GM12878 (cell line): ENCODE measurements at regions of chr14 and their contacts with region 1.

Region 1: GRCh38 chr14:76962303-76962660 is 66.2 kb downstream of the IRF2BPL start:
- DNase-seq: no peak
- ATAC-seq: no peak
- H3K4me3 ChIP-seq: peak overlapping the region; percentile 50; the same call in 1 of the 2 replicates
- H3K27ac ChIP-seq: peak overlapping the region; percentile 90
- H3K4me1 ChIP-seq: peaks cover 77% of the 10 kb centered on the region
- H3K27me3 ChIP-seq: no peaks in the 10 kb centered on the region
- CTCF ChIP-seq: no peak
- EP300 ChIP-seq: no peak
- POLR2A ChIP-seq: no peak
- RAD21 ChIP-seq: no peak

Region 2: GRCh38 chr14:76910371-76910890 is 51.9 kb before region 1 on chr14:
- CTCF ChIA-PET with region 1: interaction called, 50 read pairs
- POLR2A ChIA-PET with region 1: interaction called, 9 read pairs
- RAD21 ChIA-PET with region 1: interaction called, 51 read pairs
- SMC1A ChIA-PET with region 1: interaction called, 27 read pairs
- in situ Hi-C with region 1: no loop called
- intact Hi-C with region 1: loop called (anchors 1 kb)
- DNase-seq: no peak
- ATAC-seq: no peak
- H3K4me3 ChIP-seq: no peak overlapping the region
- H3K27ac ChIP-seq: no peak overlapping the region
- H3K4me1 ChIP-seq: peaks cover 9% of the 10 kb centered on the region
- H3K27me3 ChIP-seq: no peaks in the 10 kb centered on the region
- CTCF ChIP-seq: no peak
- EP300 ChIP-seq: no peak
- POLR2A ChIP-seq: no peak
- RAD21 ChIP-seq: no peak

Region 3: DNA sequence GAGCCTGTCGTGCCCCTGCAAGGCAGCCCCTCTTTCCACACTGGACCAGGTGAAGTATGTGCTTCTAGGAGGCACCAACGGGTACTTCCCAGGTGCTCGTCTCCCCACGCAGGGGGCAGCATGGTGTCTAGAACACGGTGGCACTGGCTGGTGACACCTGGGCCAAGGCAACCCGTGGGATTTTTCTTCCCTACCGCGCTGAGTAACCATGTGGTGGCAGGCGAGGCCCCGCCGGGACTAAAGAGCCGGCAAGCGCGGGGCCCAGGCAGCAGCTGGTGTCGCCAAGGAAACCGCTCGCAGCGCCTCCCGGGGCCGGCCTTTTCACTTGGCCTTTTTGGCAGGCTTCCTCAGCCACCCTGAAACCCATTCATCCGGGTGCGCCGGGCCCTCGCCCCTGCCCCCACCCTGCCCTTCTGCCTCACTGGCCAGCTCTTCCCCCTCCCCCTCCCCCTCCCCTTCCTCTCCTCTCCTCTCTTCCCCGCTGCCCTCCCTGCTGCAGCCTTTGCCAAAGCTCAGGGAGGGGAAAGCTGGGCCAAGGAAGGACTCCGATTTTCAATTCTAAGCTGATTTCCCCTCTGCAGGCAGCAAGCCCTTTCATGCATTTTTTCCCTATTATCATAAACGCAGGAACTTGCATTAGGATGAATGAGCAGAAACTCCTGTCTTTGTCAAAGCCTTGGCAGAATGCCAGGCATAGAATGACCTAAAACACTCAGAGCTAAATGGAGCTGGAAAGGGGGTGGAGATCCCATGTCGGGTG is 15.0 kb before region 1 on chr14:
- CTCF ChIA-PET with region 1: interaction called, 21 read pairs
- POLR2A ChIA-PET with region 1: interaction called, 95 read pairs
- RAD21 ChIA-PET with region 1: interaction called, 285 read pairs
- SMC1A ChIA-PET with region 1: interaction called, 179 read pairs
- in situ Hi-C with region 1: no loop called
- intact Hi-C with region 1: loop called (anchors 2 kb)
- DNase-seq: peak; percentile 67
- ATAC-seq: peak; percentile 87
- H3K4me3 ChIP-seq: no peak overlapping the region
- H3K27ac ChIP-seq: peak overlapping the region; percentile 64
- H3K4me1 ChIP-seq: peaks cover 29% of the 10 kb centered on the region
- H3K27me3 ChIP-seq: no peaks in the 10 kb centered on the region
- CTCF ChIP-seq: peak; percentile 45 to 72 (median 58)
- EP300 ChIP-seq: peak in 1 of 2 experiments; percentile 65; a peak in 2 of 4 replicates
- POLR2A ChIP-seq: no peak
- RAD21 ChIP-seq: peak; percentile 72

Region 4: GRCh38 chr14:76985540-76986230 is 23.4 kb after region 1 on chr14:
- CTCF ChIA-PET with region 1: interaction called, 3 read pairs
- POLR2A ChIA-PET with region 1: interaction called, 3 read pairs
- RAD21 ChIA-PET with region 1: interaction called, 19 read pairs
- SMC1A ChIA-PET with region 1: interaction called, 6 read pairs
- in situ Hi-C with region 1: no loop called
- intact Hi-C with region 1: no loop called
- DNase-seq: no peak
- ATAC-seq: peak; percentile 46
- H3K4me3 ChIP-seq: no peak overlapping the region
- H3K27ac ChIP-seq: no peak overlapping the region
- H3K4me1 ChIP-seq: peaks cover 4% of the 10 kb centered on the region
- H3K27me3 ChIP-seq: no peaks in the 10 kb centered on the region
- CTCF ChIP-seq: no peak
- EP300 ChIP-seq: no peak
- POLR2A ChIP-seq: no peak
- RAD21 ChIP-seq: no peak

Region 5: GRCh38 chr14:77023001-77023996 is 61.0 kb after region 1 on chr14:
- CTCF ChIA-PET with region 1: interaction called, 22 read pairs
- POLR2A ChIA-PET with region 1: interaction called, 48 read pairs
- RAD21 ChIA-PET with region 1: interaction called, 101 read pairs
- SMC1A ChIA-PET with region 1: interaction called, 133 read pairs
- in situ Hi-C with region 1: no loop called
- intact Hi-C with region 1: loop called (anchors 1 kb)
- DNase-seq: no peak
- ATAC-seq: peak; percentile 7
- H3K4me3 ChIP-seq: no peak overlapping the region
- H3K27ac ChIP-seq: peak overlapping the region; percentile 56
- H3K4me1 ChIP-seq: peaks cover 51% of the 10 kb centered on the region
- H3K27me3 ChIP-seq: no peaks in the 10 kb centered on the region
- CTCF ChIP-seq: 0 out of 6 replicates have a peak, but pooled peaks of 2 of the 3 experiments have one; percentile 2 to 14
- EP300 ChIP-seq: no peak
- POLR2A ChIP-seq: no peak
- RAD21 ChIP-seq: no peak

Region 6: GRCh38 chr14:77033622-77034521 is 71.6 kb after region 1 on chr14:
- CTCF ChIA-PET with region 1: interaction called, 15 read pairs
- POLR2A ChIA-PET with region 1: interaction called, 48 read pairs
- RAD21 ChIA-PET with region 1: interaction called, 101 read pairs
- SMC1A ChIA-PET with region 1: interaction called, 172 read pairs
- in situ Hi-C with region 1: no loop called
- intact Hi-C with region 1: no loop called
- DNase-seq: peak; percentile 72
- ATAC-seq: peak; percentile 86
- H3K4me3 ChIP-seq: peak overlapping the region; percentile 78
- H3K27ac ChIP-seq: peak overlapping the region; percentile 99
- H3K4me1 ChIP-seq: peaks cover 61% of the 10 kb centered on the region
- H3K27me3 ChIP-seq: no peaks in the 10 kb centered on the region
- CTCF ChIP-seq: no peak
- EP300 ChIP-seq: peak in 1 of 2 experiments; percentile 47; a peak in 3 of 4 replicates
- POLR2A ChIP-seq: peak; percentile 85
- RAD21 ChIP-seq: no peak

Region 7: GRCh38 chr14:77053046-77053841 is 91.0 kb after region 1 on chr14:
- CTCF ChIA-PET with region 1: interaction called, 18 read pairs
- POLR2A ChIA-PET with region 1: interaction called, 6 read pairs
- RAD21 ChIA-PET with region 1: interaction called, 48 read pairs
- SMC1A ChIA-PET with region 1: interaction called, 24 read pairs
- in situ Hi-C with region 1: no loop called
- intact Hi-C with region 1: loop called (anchors 1 kb)
- DNase-seq: no peak
- ATAC-seq: peak; percentile 98
- H3K4me3 ChIP-seq: no peak overlapping the region
- H3K27ac ChIP-seq: no peak overlapping the region
- H3K4me1 ChIP-seq: peaks cover 12% of the 10 kb centered on the region
- H3K27me3 ChIP-seq: no peaks in the 10 kb centered on the region
- CTCF ChIP-seq: peak; percentile 77 to 90 (median 85)
- EP300 ChIP-seq: no peak
- POLR2A ChIP-seq: no peak
- RAD21 ChIP-seq: peak; percentile 91

Region 8: GRCh38 chr14:77400219-77400618 is 437.9 kb after region 1 on chr14:
- CTCF ChIA-PET with region 1: no interaction called
- POLR2A ChIA-PET with region 1: no interaction called
- RAD21 ChIA-PET with region 1: no interaction called
- SMC1A ChIA-PET with region 1: no interaction called
- in situ Hi-C with region 1: no loop called
- intact Hi-C with region 1: no loop called
- DNase-seq: no peak
- ATAC-seq: no peak
- H3K4me3 ChIP-seq: no peak overlapping the region
- H3K27ac ChIP-seq: no peak overlapping the region
- H3K4me1 ChIP-seq: no peaks in the 10 kb centered on the region
- H3K27me3 ChIP-seq: no peaks in the 10 kb centered on the region
- CTCF ChIP-seq: no peak
- EP300 ChIP-seq: no peak
- POLR2A ChIP-seq: no peak
- RAD21 ChIP-seq: no peak

Region 9: GRCh38 chr14:78327426-78328221 is 1365.3 kb after region 1 on chr14:
- CTCF ChIA-PET with region 1: no interaction called
- POLR2A ChIA-PET with region 1: no interaction called
- RAD21 ChIA-PET with region 1: no interaction called
- SMC1A ChIA-PET with region 1: no interaction called
- in situ Hi-C with region 1: no loop called
- intact Hi-C with region 1: no loop called
- DNase-seq: no peak
- ATAC-seq: no peak
- H3K4me3 ChIP-seq: no peak overlapping the region
- H3K27ac ChIP-seq: no peak overlapping the region
- H3K4me1 ChIP-seq: no peaks in the 10 kb centered on the region
- H3K27me3 ChIP-seq: no peaks in the 10 kb centered on the region; a peak in 2 of 4 replicates
- CTCF ChIP-seq: no peak
- EP300 ChIP-seq: no peak
- POLR2A ChIP-seq: no peak
- RAD21 ChIP-seq: no peak